ENCODE measurements at regions of chr19 and their contacts with region 1.

Region 1: DNA sequence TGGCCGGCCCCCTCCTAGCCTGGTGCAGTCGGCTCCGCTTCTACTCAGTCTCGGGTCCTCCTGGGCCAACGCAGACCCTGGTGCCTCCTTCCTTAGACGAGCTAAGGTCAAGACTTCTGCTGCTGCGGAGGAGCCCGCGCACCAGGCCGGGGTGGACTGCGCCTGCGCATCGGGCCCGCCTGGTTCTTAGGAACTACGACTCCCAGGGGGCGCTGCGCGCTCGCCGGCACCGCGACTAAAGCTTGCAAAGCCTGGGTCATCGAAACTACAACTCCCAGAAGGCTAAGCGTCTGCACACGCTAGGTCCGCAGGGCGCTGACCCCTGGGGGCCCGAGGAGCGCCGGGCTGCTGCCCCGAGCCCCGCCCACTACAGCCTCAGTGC is at the start of gene ZNF835:
- DNase-seq: peak; percentile 88 to 94
- H3K4me3 ChIP-seq: peak within 1 kb of the TSS; percentile 62 to 64
- H3K27ac ChIP-seq: peak within 1 kb of the TSS; percentile 51 to 67
- H3K4me1 ChIP-seq: peaks cover 0 to 18% (median 13%) of the 10 kb centered on the region in 4 donors
- H3K27me3 ChIP-seq: no peaks in the 10 kb centered on the region
- CTCF ChIP-seq: peak; percentile 26 to 31

Region 2: GRCh38 chr19:56393119-56394012 is 278.2 kb before region 1 on chr19 and contains the start of gene ZNF582:
- intact Hi-C with region 1: loop called (anchors 5 kb)
- DNase-seq: peak; percentile 96 to 97
- H3K4me3 ChIP-seq: peak within 1 kb of the TSS; percentile 64 to 66
- H3K27ac ChIP-seq: peak within 1 kb of the TSS; percentile 88 to 93
- H3K4me1 ChIP-seq: peaks cover 0 to 11% (median 3%) of the 10 kb centered on the region in 4 donors
- H3K27me3 ChIP-seq: no peaks in the 10 kb centered on the region
- CTCF ChIP-seq: peak; percentile 47 to 69

Region 3: GRCh38 chr19:56712611-56713276 is 41.1 kb after region 1 on chr19:
- intact Hi-C with region 1: no loop called
- DNase-seq: no peak
- H3K4me3 ChIP-seq: no peak overlapping the region
- H3K27ac ChIP-seq: no peak overlapping the region
- H3K4me1 ChIP-seq: no peaks in the 10 kb centered on the region
- H3K27me3 ChIP-seq: no peaks in the 10 kb centered on the region
- CTCF ChIP-seq: no peak